Sciatic nerve (tissue), 2 donors: ENCODE measurements at regions of chr14 and their contacts with region 1.

Region 1: GRCh38 chr14:92941531-92941930 is 18.6 kb downstream of the CHGA start:
- DNase-seq: no peak
- ATAC-seq: no peak

Region 2: DNA sequence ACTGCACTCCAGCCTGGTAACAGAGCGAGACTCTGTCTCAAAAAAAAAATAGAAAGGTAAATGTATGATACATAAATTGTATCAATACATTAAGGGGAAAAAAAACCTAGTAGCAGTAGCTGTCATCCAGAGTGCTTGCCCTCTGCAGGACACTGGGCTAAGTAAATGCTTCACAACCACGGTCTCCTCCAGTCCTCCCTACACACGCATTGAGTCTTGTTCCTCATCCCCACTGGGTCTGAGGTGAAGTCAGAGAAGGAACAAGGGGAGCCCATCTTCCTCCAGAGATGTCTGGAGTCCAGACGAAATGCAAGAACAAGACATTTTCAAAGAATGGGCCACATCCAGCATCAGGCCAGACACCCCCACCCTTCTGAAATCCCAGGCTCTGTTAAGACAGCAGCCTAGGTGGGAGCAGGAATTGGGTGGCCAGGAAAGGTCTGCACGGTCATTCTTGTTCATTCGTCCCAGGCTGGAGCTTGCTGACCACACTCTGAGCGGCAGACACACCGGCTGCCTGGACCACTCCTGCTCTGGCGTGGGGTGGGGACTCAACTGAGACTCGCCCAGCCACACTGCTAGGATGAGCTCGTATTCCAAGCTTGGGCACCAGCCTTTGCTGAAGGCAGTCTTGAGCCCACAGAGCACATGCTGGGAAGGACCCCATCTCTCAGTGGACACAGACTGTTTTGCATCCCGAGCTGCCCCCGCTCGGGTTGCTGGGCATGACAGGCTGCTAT is 26.9 kb after region 1 on chr14:
- intact Hi-C with region 1: loop called (anchors 1 kb)
- DNase-seq: no peak
- ATAC-seq: no peak